Activated CD4-positive, alpha-beta T cell treated with anti-CD3 and anti-CD28 coated beads for 36 hours (primary cell): ENCODE measurements at regions of chr4 and their contacts with region 1.

Region 1: DNA sequence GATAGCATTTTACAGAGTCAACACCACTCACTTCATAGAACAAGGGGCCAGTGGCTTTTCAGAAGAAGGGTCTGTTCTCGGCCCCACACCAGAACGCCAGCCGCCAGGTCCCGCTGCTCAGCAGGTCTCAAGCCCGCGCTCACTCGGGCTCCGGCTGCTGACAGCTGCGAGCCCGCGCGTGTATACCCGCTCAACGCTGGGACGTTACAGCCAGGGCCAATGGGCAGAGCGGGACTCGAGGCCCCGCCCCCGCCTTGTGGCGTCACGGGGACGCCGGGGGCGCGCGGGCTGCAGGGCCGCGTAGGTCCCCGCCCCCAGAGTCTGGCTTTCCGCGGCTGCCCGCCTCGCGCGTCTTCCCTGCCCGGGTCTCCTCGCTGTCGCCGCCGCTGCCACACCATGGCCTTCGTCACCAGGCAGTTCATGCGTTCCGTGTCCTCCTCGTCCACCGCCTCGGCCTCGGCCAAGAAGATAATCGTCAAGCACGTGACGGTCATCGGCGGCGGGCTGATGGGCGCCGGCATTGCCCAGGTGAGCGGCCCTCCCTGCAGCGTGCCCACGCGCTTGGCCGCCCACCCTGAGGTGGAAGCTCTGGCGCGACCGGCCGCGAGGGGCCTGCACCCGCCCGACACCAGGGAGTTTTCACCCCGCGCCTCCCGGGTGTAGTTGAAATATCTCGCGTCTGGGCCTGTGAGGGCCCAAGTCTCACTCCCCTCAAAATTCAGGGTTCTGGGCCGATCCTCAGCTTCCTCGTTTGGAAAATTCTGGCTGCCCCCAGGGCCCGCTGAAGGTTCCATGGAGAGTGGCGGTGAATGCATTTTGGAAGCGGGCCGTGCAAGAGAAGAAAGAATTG is at the start of gene HADH:
- DNase-seq: peak; percentile 97
- ATAC-seq: peak; percentile 98
- H3K4me3 Mint-ChIP-seq: peak within 1 kb of the TSS; percentile 95
- H3K27ac Mint-ChIP-seq: peak within 1 kb of the TSS; percentile 96
- H3K4me1 Mint-ChIP-seq: peaks cover 54% of the 10 kb centered on the region
- H3K27me3 Mint-ChIP-seq: no peaks in the 10 kb centered on the region
- total RNA-seq, gene HADH: 58.4 to 60.8 TPM

Region 2: GRCh38 chr4:106315968-106316772 is 1673.6 kb before region 1 on chr4 and contains the starts of genes AIMP1 and TBCK:
- CTCF ChIA-PET with region 1: no interaction called
- POLR2A ChIA-PET with region 1: no interaction called
- intact Hi-C with region 1: loop called in 1 of 2 experiments (anchors 2 kb)
- DNase-seq: peak; percentile 91
- ATAC-seq: peak; percentile 83
- H3K4me3 Mint-ChIP-seq: no peak within 1 kb of the TSS
- H3K27ac Mint-ChIP-seq: no peak within 1 kb of the TSS
- H3K4me1 Mint-ChIP-seq: peaks cover 49% of the 10 kb centered on the region
- H3K27me3 Mint-ChIP-seq: no peaks in the 10 kb centered on the region
- total RNA-seq, gene AIMP1: 41.9 to 69.5 TPM
- total RNA-seq, gene TBCK: 22.5 to 25.1 TPM

Region 3: GRCh38 chr4:107930821-107931774 is 58.7 kb before region 1 on chr4 and contains the start of gene CYP2U1:
- CTCF ChIA-PET with region 1: no interaction called
- POLR2A ChIA-PET with region 1: interaction called, 3 read pairs
- intact Hi-C with region 1: loop called (anchors 1 to 2 kb)
- DNase-seq: peak; percentile 82
- ATAC-seq: peak; percentile 89
- H3K4me3 Mint-ChIP-seq: peak within 1 kb of the TSS; percentile 71
- H3K27ac Mint-ChIP-seq: peak within 1 kb of the TSS; percentile 85
- H3K4me1 Mint-ChIP-seq: peaks cover 27% of the 10 kb centered on the region
- H3K27me3 Mint-ChIP-seq: no peaks in the 10 kb centered on the region
- total RNA-seq, gene CYP2U1: 2.3 to 2.4 TPM